ENCODE measurements at regions of chr13 and their contacts with region 1.

Region 1: GRCh38 chr13:41075034-41075433 is 13.7 kb downstream of the WBP4 start:
- DNase-seq: peak; percentile 46
- ATAC-seq: no peak
- H3K4me3 ChIP-seq: no peak overlapping the region
- H3K27ac ChIP-seq: no peak overlapping the region
- H3K4me1 ChIP-seq: no peaks in the 10 kb centered on the region
- H3K27me3 ChIP-seq: no peaks in the 10 kb centered on the region
- CTCF ChIP-seq: peak; percentile 61

Region 2: GRCh38 chr13:41132512-41133152 is 57.6 kb after region 1 on chr13 and contains the start of gene KBTBD6:
- CTCF ChIA-PET with region 1: no interaction called
- POLR2A ChIA-PET with region 1: no interaction called
- intact Hi-C with region 1: loop called (anchors 2 kb)
- DNase-seq: peak; percentile 98
- ATAC-seq: peak; percentile 95
- H3K4me3 ChIP-seq: peak within 1 kb of the TSS; percentile 85
- H3K27ac ChIP-seq: peak within 1 kb of the TSS; percentile 68
- H3K4me1 ChIP-seq: peaks cover 41% of the 10 kb centered on the region
- H3K27me3 ChIP-seq: no peaks in the 10 kb centered on the region
- CTCF ChIP-seq: no peak
- total RNA-seq, gene KBTBD6: 4.4 and 5.1 TPM in 2 replicates

Region 3: DNA sequence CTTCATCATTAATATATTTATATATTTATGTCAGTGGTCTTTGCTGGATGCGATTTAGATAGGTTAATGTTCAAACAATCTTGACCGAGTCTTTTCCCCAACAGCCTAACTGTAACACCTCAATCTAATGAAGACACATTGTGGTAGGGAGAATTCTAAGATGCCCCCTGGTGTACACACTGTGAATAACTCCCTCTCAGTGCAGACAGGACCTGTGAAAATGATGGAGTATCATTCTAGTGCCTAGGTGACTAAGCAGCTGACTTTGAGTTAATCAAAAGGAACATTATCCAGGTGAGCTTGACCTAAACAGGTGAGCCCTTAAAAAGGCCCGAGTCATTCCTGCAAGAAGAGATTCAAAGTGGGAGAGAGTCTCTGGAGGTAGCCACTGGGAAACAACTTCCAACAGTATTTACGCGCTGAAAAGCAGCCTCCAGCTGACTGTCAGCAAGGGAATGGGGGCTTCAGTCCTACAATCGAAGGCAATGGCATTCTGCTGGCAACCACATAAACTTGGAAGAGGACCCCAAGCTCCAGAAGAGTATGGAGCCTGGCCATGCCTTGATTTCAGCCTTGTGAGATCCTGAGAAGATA is 147.3 kb after region 1 on chr13:
- CTCF ChIA-PET with region 1: no interaction called
- POLR2A ChIA-PET with region 1: no interaction called
- intact Hi-C with region 1: loop called (anchors 1 kb)
- DNase-seq: peak; percentile 72
- ATAC-seq: peak; percentile 64
- H3K4me3 ChIP-seq: no peak overlapping the region
- H3K27ac ChIP-seq: no peak overlapping the region
- H3K4me1 ChIP-seq: peaks cover 11% of the 10 kb centered on the region; the same call in 1 of the 2 replicates
- H3K27me3 ChIP-seq: no peaks in the 10 kb centered on the region
- CTCF ChIP-seq: peak; percentile 72

Region 4: GRCh38 chr13:41443966-41444365 is 368.9 kb after region 1 on chr13:
- CTCF ChIA-PET with region 1: no interaction called
- POLR2A ChIA-PET with region 1: no interaction called
- intact Hi-C with region 1: no loop called
- DNase-seq: no peak
- ATAC-seq: no peak
- H3K4me3 ChIP-seq: no peak overlapping the region
- H3K27ac ChIP-seq: no peak overlapping the region
- H3K4me1 ChIP-seq: no peaks in the 10 kb centered on the region
- H3K27me3 ChIP-seq: no peaks in the 10 kb centered on the region
- CTCF ChIP-seq: no peak